Posterior cingulate gyrus (tissue), 11 donors: ENCODE measurements at regions of chr3 and their contacts with region 1.

Region 1: GRCh38 chr3:107956991-107957900 is 133.6 kb downstream of the CD47 start:
- DNase-seq: peak; percentile 31 to 91 (median 68)

Region 2: GRCh38 chr3:108006077-108006771 is 49.0 kb after region 1 on chr3:
- intact Hi-C with region 1: loop called (anchors 5 kb)
- DNase-seq: no peak